ENCODE measurements at regions of chr12 and their contacts with region 1.

Region 1: DNA sequence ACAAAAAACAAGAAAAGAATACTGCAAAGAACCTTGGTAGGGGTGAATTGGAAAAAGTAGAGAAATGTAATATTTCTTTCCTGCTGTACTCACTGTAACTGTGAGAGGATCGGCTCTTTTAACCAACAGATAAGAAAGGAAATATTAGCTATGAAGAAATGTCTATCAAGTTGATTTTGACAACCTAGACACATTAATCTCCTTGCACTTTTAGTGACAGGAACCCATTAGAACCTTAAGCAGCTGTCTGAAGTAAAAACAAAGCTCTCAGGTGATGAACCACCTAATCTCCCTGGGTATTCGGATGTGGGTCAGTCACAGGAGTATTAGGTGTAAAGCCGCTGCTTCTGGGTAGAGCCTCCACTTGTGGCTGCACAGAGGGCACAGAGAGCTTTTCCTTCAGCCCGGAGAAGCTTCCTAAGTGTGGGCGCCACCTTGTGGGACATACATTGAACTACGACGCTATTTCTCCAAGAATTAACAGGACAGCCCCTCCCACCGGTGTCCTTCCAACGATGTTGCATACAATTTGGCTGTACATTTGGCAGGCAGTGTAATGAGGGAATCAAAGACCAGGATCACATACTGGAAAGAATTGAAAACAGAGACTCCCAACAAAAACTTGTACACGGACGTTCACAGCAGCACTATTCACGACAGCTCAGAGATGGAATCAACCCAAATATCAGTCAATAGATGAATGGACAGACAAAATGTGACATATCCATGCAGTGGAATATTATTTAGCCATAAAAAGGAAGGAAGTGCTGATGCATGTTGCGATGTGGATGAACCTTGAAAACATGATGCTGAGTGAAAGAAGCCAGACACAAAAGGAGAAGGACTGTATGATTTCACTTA is 28.9 kb upstream of the MAPKAPK5 start:
- DNase-seq: peak; percentile 91
- H3K4me3 Mint-ChIP-seq: no peak overlapping the region
- H3K27ac Mint-ChIP-seq: no peak overlapping the region
- H3K4me1 Mint-ChIP-seq: peaks cover 6% of the 10 kb centered on the region
- H3K27me3 Mint-ChIP-seq: no peaks in the 10 kb centered on the region
- CTCF ChIP-seq: peak; percentile 77

Region 2: DNA sequence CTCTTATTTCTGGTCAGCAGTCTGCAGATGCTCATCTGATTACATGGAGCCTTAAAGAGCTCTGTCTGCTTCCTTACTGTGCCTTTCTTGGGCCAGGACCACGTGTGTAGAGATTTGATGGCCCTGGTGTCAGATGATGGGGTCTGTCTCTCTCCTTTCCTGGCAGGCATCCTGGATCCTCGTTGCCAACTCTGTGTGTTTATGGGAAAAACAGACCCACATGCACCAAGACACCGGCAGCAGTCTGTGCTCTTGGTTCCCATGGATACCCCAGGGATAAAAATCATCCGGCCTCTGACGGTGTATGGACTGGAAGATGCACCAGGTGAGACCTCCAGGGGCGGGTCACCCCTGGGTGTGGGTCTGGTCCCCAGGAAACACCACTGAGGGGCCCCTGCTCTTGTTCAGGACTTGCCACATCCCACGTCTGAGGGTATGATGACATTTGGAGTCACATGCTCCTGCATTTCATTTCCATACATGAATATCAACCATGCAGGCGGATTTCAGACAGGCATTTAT is 64.9 kb before region 1 on chr12:
- CTCF ChIA-PET with region 1: interaction called, 65 read pairs
- POLR2A ChIA-PET with region 1: interaction called, 5 read pairs
- intact Hi-C with region 1: loop called (anchors 1 kb)
- DNase-seq: no peak
- H3K4me3 Mint-ChIP-seq: no peak overlapping the region
- H3K27ac Mint-ChIP-seq: no peak overlapping the region
- H3K4me1 Mint-ChIP-seq: no peaks in the 10 kb centered on the region
- H3K27me3 Mint-ChIP-seq: no peaks in the 10 kb centered on the region
- CTCF ChIP-seq: no peak

Region 3: GRCh38 chr12:111764120-111764821 is 48.8 kb before region 1 on chr12:
- CTCF ChIA-PET with region 1: interaction called, 10 read pairs
- POLR2A ChIA-PET with region 1: interaction called, 5 read pairs
- intact Hi-C with region 1: no loop called
- DNase-seq: no peak
- H3K4me3 Mint-ChIP-seq: no peak overlapping the region
- H3K27ac Mint-ChIP-seq: no peak overlapping the region
- H3K4me1 Mint-ChIP-seq: no peaks in the 10 kb centered on the region
- H3K27me3 Mint-ChIP-seq: peaks cover 17% of the 10 kb centered on the region
- CTCF ChIP-seq: no peak

Region 4: GRCh38 chr12:111788178-111788654 is 24.9 kb before region 1 on chr12:
- CTCF ChIA-PET with region 1: interaction called, 16 read pairs
- POLR2A ChIA-PET with region 1: interaction called, 7 read pairs
- intact Hi-C with region 1: no loop called
- DNase-seq: peak; percentile 79
- H3K4me3 Mint-ChIP-seq: no peak overlapping the region
- H3K27ac Mint-ChIP-seq: no peak overlapping the region
- H3K4me1 Mint-ChIP-seq: peaks cover 12% of the 10 kb centered on the region
- H3K27me3 Mint-ChIP-seq: no peaks in the 10 kb centered on the region
- CTCF ChIP-seq: peak; percentile 58